Sciatic nerve (tissue), 2 donors: ENCODE measurements at regions of chr15 and their contacts with region 1.

Region 1: GRCh38 chr15:27514526-27514925 is 543.5 kb downstream of the GABRG3 start:
- DNase-seq: no peak
- ATAC-seq: no peak

Region 2: GRCh38 chr15:27095886-27096624 is 418.5 kb before region 1 on chr15:
- intact Hi-C with region 1: loop called (anchors 10 kb)
- DNase-seq: no peak
- ATAC-seq: no peak

Region 3: GRCh38 chr15:27538325-27538724 is 23.8 kb after region 1 on chr15:
- intact Hi-C with region 1: no loop called
- DNase-seq: no peak
- ATAC-seq: no peak

Region 4: GRCh38 chr15:27679731-27680471 is 165.4 kb after region 1 on chr15:
- intact Hi-C with region 1: no loop called
- DNase-seq: no peak
- ATAC-seq: no peak